ENCODE measurements at regions of chr19 and their contacts with region 1.

Region 1: GRCh38 chr19:17075035-17075863 is at the starts of genes HAUS8 and MYO9B:
- DNase-seq: peak; percentile 100
- ATAC-seq: peak; percentile 82
- H3K4me3 Mint-ChIP-seq: peak within 1 kb of the TSS; percentile 99
- H3K27ac Mint-ChIP-seq: peak within 1 kb of the TSS; percentile 98
- H3K4me1 Mint-ChIP-seq: peaks cover 56% of the 10 kb centered on the region
- H3K27me3 Mint-ChIP-seq: no peaks in the 10 kb centered on the region
- total RNA-seq, gene HAUS8: 32.6 to 41.7 TPM
- total RNA-seq, gene MYO9B: 90.3 to 98.5 TPM

Region 2: DNA sequence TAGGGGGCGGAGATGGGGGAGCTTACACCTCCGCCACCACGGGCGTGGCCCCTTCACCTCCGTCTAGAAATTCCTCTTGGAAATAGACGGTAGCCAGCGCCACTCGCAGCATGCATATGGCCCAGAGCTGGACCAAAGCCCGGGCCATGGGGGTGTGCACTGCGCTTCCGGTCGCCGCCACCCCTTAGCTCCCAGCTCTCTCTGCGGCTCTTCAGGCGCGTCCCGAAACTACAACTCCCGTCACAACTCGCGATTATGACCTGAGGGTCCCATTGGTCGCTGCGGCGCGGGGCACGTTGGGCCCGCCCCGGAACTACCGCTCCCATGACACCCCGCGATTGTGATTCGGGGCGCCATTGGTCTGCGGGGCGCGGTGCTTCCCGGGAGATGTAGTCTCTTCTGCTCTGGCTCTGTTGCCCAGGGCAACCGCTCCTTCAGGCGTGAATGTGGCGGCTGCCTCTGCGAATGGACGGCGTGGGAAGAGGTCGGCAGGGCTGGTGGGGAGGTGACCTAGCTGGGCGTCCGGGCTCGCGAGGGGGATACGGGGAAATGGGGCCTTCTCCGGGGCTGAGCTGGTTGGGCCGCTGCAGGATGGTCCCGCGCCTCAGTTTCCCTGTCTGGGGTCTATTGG is 579.2 kb before region 1 on chr19 and contains the starts of genes C19orf44 and CALR3:
- CTCF ChIA-PET with region 1: no interaction called
- POLR2A ChIA-PET with region 1: no interaction called
- intact Hi-C with region 1: loop called in 1 of 2 experiments (anchors 1 kb)
- DNase-seq: peak; percentile 99
- ATAC-seq: peak; percentile 99
- H3K4me3 Mint-ChIP-seq: peak within 1 kb of the TSS; percentile 89
- H3K27ac Mint-ChIP-seq: peak within 1 kb of the TSS; percentile 79
- H3K4me1 Mint-ChIP-seq: peaks cover 13% of the 10 kb centered on the region
- H3K27me3 Mint-ChIP-seq: no peaks in the 10 kb centered on the region
- total RNA-seq, gene C19orf44: 2.9 to 4.0 TPM
- total RNA-seq, gene CALR3: not detected

Region 3: DNA sequence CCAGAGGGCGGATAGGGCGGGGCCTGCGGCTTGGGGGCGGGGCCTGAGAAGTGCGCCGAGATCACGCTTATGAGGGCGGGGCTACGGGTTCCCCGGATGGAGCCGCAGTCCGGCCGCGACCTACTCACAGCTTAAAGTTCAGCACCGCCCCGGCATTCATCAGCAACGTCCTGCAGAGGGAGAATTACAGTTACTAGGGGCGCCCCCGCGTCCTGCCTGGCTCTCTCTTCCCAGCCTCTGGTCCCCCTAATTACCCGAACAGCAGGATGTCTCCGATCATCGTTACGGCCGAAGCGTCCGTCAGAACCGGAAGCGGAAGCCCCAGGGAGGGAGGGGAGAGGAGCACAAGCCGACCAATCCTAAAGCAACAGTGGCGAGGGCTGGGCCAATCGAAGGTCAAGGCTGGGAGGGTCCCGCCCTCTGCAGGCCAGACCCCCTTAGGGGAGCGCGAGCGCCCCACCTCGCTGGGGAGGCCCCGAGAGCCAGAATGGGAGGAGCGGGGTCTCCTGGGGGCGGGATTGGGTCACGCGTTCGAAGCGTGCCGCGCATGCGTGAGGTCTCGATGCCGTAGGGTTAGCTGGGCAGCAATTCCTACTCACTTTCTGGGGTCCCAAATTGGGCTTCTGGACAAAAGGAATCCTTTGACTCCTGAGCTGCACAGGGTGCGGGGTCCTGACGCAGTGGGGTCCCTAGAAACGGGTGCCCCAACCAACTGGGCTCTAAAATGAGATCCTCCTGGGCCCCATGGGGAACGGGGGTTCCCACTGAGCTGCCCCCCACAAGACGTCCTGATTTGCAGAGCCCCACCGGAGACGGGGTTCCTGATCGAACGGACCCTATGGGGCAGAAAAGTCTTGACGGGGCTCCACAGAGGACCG is 415.2 kb before region 1 on chr19 and contains the start of gene SMIM7:
- CTCF ChIA-PET with region 1: no interaction called
- POLR2A ChIA-PET with region 1: no interaction called
- intact Hi-C with region 1: loop called in 1 of 2 experiments (anchors 1 kb)
- DNase-seq: peak; percentile 99
- ATAC-seq: peak; percentile 99
- H3K4me3 Mint-ChIP-seq: peak within 1 kb of the TSS; percentile 99
- H3K27ac Mint-ChIP-seq: peak within 1 kb of the TSS; percentile 94
- H3K4me1 Mint-ChIP-seq: peaks cover 34% of the 10 kb centered on the region
- H3K27me3 Mint-ChIP-seq: peaks cover 4% of the 10 kb centered on the region
- total RNA-seq, gene SMIM7: 46.5 to 52.2 TPM

Region 4: DNA sequence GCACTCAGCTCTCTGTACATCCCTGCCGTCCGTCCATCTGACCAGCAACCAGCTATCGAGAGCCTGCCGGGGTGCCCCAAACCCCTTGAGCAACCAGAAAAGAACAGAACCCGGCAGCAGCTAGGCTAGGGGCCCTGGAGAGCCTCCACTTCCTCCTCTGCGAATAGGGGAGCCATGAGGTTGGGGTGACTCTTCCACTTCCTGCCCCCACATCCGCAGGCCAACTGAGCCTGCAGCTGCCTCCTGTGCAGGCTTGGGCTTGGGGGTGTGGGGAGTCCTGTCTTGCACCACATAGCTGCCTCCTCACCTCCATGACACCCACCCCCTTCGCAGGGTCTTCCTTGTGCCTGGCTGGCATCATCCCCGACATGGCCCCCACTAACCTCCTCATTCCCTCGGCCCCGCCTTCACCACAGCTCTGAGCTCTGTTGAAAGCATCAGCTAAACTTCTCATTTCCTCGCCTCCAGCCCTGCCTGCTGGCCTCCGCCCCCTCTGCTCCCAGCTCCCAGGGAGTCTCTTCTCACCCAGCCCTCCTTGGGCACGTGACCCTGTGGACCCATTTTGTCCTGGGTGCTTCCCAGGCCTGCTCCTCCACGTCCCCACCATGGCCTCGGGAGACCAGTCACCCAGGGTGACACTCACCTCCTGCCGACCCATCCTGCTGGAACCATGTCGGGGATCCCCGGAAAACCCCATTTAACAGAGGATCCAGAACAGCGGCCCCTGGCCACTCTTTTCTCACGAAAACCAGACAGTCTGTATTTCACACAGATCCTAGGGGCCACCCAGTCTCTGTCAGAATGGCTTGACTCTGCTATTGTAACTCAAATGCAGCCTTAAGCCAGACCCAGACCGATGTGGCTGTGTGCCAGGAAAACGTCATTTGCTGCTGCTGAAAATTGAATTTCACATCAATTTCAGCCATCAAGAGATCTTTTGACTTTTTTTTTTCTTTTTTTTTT is 50.7 kb after region 1 on chr19:
- CTCF ChIA-PET with region 1: no interaction called
- POLR2A ChIA-PET with region 1: interaction called, 6 read pairs
- intact Hi-C with region 1: loop called (anchors 1 to 2 kb)
- DNase-seq: peak; percentile 82
- ATAC-seq: peak; percentile 89
- H3K4me3 Mint-ChIP-seq: peak overlapping the region; percentile 68
- H3K27ac Mint-ChIP-seq: peak overlapping the region; percentile 94
- H3K4me1 Mint-ChIP-seq: peaks cover 42% of the 10 kb centered on the region
- H3K27me3 Mint-ChIP-seq: no peaks in the 10 kb centered on the region

Region 5: GRCh38 chr19:17266975-17267788 is 191.9 kb after region 1 on chr19 and contains the start of gene BABAM1:
- CTCF ChIA-PET with region 1: no interaction called
- POLR2A ChIA-PET with region 1: interaction called, 5 read pairs
- intact Hi-C with region 1: loop called (anchors 1 kb)
- DNase-seq: peak; percentile 98
- ATAC-seq: peak; percentile 96
- H3K4me3 Mint-ChIP-seq: peak within 1 kb of the TSS; percentile 94
- H3K27ac Mint-ChIP-seq: peak within 1 kb of the TSS; percentile 85
- H3K4me1 Mint-ChIP-seq: peaks cover 11% of the 10 kb centered on the region
- H3K27me3 Mint-ChIP-seq: no peaks in the 10 kb centered on the region
- total RNA-seq, gene BABAM1: 109 to 132 TPM

Region 6: GRCh38 chr19:17390665-17391370 is 315.6 kb after region 1 on chr19:
- CTCF ChIA-PET with region 1: no interaction called
- POLR2A ChIA-PET with region 1: no interaction called
- intact Hi-C with region 1: loop called in 1 of 2 experiments (anchors 5 kb)
- DNase-seq: peak; percentile 97
- ATAC-seq: peak; percentile 98
- H3K4me3 Mint-ChIP-seq: peak overlapping the region; percentile 83
- H3K27ac Mint-ChIP-seq: peak overlapping the region; percentile 33
- H3K4me1 Mint-ChIP-seq: peaks cover 24% of the 10 kb centered on the region
- H3K27me3 Mint-ChIP-seq: peaks cover 4% of the 10 kb centered on the region

Region 7: DNA sequence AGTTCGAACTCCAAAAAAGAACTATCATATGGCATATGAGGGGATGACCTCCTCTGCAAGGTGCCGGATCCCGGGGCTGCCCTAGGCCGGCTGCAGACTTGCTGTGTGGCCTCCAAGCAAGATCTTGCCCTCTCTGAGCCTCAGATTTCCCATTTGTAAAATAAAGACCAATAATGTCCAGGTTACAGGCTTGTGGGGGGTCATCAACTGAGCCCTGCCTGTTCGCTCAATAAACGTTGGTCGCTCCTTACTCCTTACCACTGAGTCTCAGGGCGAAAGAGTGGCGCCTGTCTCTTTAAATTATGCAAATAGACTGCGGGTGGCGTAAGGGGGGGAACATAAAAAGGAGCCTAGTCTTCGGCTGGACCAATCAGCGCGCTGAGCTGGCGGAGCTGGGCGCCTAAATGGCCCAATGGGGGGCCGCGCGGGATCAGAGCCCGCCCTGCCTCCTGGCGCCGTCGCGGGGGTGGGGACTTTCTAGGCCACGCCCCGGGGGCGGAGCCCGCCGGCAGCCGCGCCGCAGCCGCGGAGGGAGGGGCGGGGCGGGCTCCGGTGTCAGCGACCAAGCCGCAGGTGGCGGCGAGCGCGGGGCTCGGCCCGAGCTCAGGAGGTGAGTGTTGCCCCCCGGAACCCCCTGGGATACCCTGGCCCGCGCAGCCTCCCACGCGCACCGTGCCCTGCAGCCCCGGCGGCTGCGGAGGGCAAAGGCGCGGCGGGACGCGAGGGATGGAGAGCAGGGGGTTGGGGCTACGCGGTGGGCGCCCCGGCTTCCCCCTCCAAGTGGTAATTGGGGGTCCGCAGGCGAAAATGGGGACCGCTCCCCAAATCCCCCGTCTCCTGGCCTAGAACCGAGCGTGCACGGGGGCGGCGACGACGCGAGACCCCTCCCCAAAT is 672.2 kb after region 1 on chr19:
- CTCF ChIA-PET with region 1: no interaction called
- POLR2A ChIA-PET with region 1: no interaction called
- intact Hi-C with region 1: loop called in 1 of 2 experiments (anchors 1 kb)
- DNase-seq: peak; percentile 98
- ATAC-seq: peak; percentile 90
- H3K4me3 Mint-ChIP-seq: peak overlapping the region; percentile 76
- H3K27ac Mint-ChIP-seq: peak overlapping the region; percentile 60
- H3K4me1 Mint-ChIP-seq: peaks cover 42% of the 10 kb centered on the region
- H3K27me3 Mint-ChIP-seq: no peaks in the 10 kb centered on the region

Measured in activated CD4-positive, alpha-beta T cell treated with anti-CD3 and anti-CD28 coated beads for 36 hours (primary cell).